Aorta (tissue), 5 donors: ENCODE measurements at regions of chr1 and their contacts with region 1.

Region 1: GRCh38 chr1:114282751-114283403 is 129.2 kb upstream of the SYT6 start:
- DNase-seq: peak; percentile 93 to 94
- ATAC-seq: peak; percentile 92
- H3K4me3 ChIP-seq: no peak overlapping the region
- H3K27ac ChIP-seq: no peak overlapping the region
- H3K4me1 ChIP-seq: no peaks in the 10 kb centered on the region
- H3K27me3 ChIP-seq: peaks cover 0 to 2% of the 10 kb centered on the region in 2 donors

Region 2: DNA sequence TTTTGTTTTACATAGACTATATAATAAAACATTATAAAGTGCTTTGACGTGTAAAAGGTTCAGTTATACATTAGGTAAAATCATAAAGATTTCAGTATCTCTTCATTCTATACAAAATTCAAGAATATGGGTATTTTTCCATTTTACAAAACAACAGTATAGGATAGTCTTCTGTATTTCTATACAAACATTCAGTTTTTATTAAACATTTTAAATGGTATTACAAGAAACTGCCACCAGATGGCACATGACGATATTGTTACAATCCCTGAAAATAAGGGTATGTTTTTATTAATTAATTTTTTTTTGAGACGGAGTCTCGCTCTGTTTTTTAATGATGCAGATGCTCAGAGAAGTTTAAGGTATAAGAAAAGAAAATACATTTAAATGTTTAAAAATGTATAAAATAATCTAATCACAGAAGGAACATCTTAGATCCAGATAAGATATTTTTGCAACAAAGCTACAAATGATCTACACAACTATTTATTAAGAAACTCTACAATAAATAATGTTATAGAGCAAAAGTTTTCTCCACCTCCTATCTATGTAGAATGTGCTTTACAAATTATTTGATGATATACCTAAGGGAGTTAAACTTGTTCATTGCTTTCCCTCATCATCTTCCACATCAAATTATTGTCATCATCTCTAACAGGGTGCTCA is 447.1 kb before region 1 on chr1:
- intact Hi-C with region 1: loop called (anchors 5 to 10 kb)
- DNase-seq: no peak
- ATAC-seq: peak; percentile 44
- H3K4me3 ChIP-seq: no peak overlapping the region
- H3K27ac ChIP-seq: no peak overlapping the region
- H3K4me1 ChIP-seq: no peaks in the 10 kb centered on the region
- H3K27me3 ChIP-seq: no peaks in the 10 kb centered on the region

Region 3: GRCh38 chr1:113978863-113979702 is 303.8 kb before region 1 on chr1 and contains the start of gene OLFML3:
- intact Hi-C with region 1: loop called (anchors 2 kb)
- DNase-seq: peak; percentile 91 to 93
- ATAC-seq: peak; percentile 81
- H3K4me3 ChIP-seq: peak within 1 kb of the TSS; percentile 1 to 48
- H3K27ac ChIP-seq: peak within 1 kb of the TSS in 1 of 2 donors; percentile 83
- H3K4me1 ChIP-seq: no peaks in the 10 kb centered on the region
- H3K27me3 ChIP-seq: no peaks in the 10 kb centered on the region
- total RNA-seq, gene OLFML3: 19.8 to 96.1 TPM